Activated CD4-positive, alpha-beta T cell treated with anti-CD3 and anti-CD28 coated beads, Interleukin-2, amount 10 ng/mL, durations not matched to agents 24 days and 14 days (primary cell): ENCODE measurements at regions of chr7 and their contacts with region 1.

Region 1: DNA sequence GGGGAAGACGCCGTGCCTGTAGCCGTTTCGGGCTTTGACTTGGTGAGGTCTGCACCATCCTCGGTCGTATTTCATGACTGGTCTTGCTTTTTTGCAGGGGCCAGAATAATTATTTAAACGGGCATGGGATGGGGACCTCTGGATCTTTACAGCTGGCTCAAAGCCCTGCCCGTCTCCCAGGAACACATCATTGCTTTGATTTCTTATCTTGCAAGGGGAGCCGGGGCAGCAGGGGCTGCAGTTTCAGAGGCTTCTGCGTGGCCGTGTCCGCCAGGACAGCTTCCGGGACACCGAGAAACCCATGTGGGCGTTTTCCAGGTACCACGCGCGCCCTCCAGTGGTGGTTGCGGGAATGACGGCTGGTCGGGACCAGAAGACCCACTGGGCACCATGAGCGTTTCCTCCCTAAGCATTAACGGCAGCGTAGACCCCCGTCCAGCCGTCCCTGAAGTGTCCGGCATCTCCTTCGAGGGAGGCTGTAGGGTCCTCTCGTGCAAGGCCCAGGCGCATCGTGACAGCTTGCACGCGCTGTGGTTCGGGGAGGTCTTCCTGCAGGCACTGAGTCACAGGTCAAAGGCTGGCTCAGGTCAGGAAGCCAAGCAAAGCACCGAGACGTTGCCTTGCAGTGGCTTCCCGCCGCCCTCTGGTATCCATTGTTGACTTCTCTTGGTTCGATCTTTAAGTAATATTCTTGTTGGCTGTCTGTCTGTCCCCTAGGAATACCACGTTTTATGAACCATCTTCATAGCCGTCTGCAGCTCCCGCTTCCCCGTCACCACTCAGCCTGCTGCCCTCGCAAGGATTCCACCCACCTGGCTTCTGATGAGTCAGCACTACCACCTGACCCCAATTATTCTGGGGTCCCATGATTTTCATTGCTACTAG is 16.2 kb upstream of the ZFAND2A start:
- DNase-seq: peak; percentile 95
- H3K4me3 Mint-ChIP-seq: peak overlapping the region; percentile 48
- H3K27ac Mint-ChIP-seq: peak overlapping the region; percentile 60
- H3K4me1 Mint-ChIP-seq: peaks cover 10% of the 10 kb centered on the region
- H3K27me3 Mint-ChIP-seq: peaks cover 3% of the 10 kb centered on the region

Region 2: GRCh38 chr7:490461-491291 is 685.5 kb before region 1 on chr7:
- intact Hi-C with region 1: no loop called
- DNase-seq: no peak
- H3K4me3 Mint-ChIP-seq: no peak overlapping the region
- H3K27ac Mint-ChIP-seq: no peak overlapping the region
- H3K4me1 Mint-ChIP-seq: no peaks in the 10 kb centered on the region
- H3K27me3 Mint-ChIP-seq: peaks cover 16% of the 10 kb centered on the region

Region 3: GRCh38 chr7:992709-993607 is 183.3 kb before region 1 on chr7:
- intact Hi-C with region 1: loop called (anchors 1 kb)
- DNase-seq: peak; percentile 97
- H3K4me3 Mint-ChIP-seq: no peak overlapping the region
- H3K27ac Mint-ChIP-seq: peak overlapping the region; percentile 15
- H3K4me1 Mint-ChIP-seq: peaks cover 4% of the 10 kb centered on the region
- H3K27me3 Mint-ChIP-seq: no peaks in the 10 kb centered on the region

Region 4: DNA sequence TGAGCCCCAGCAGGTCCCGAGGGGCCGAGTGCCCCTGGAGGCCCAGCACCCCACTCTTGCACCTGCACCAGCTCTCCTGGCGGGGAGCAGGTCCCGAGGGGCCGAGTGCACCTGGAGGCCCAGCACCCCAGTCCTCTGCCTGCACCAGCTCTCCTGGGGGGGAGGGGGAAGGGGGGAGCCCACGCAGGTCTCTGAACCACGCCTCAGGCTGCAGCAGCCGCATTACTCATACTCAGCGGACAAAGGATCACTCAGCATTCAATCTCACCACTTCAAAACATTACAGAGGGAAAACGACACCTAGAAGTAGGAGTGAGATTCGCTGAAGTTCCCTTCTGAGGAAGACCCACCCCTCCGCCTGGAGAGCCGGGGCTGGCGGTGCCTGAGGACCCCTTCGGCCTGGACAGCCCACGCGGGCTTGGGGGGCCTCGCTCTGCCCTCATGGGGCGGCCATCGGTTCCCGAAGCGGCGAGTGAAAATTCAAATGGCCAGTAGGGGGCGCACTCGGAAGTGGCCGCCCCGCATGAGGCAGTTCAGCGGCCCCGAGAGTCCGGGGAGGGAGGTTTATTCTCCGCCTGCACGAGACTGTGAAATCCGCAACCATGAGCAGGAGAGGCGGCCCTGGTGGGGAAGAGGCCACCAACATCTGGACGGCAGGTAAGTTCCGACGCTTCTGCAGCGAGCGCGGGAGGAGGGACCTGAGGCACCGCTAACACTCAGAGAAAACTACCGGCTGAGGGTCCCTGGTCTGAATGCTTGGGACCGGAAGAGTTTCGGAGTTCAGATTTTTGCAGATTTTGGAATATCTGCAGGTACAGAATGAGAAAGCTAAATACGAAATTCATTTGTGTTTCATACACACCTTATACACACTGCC is 89.4 kb before region 1 on chr7:
- intact Hi-C with region 1: loop called (anchors 1 kb)
- DNase-seq: peak; percentile 93
- H3K4me3 Mint-ChIP-seq: peak overlapping the region; percentile 79
- H3K27ac Mint-ChIP-seq: peak overlapping the region; percentile 11
- H3K4me1 Mint-ChIP-seq: peaks cover 9% of the 10 kb centered on the region
- H3K27me3 Mint-ChIP-seq: peaks cover 2% of the 10 kb centered on the region

Region 5: DNA sequence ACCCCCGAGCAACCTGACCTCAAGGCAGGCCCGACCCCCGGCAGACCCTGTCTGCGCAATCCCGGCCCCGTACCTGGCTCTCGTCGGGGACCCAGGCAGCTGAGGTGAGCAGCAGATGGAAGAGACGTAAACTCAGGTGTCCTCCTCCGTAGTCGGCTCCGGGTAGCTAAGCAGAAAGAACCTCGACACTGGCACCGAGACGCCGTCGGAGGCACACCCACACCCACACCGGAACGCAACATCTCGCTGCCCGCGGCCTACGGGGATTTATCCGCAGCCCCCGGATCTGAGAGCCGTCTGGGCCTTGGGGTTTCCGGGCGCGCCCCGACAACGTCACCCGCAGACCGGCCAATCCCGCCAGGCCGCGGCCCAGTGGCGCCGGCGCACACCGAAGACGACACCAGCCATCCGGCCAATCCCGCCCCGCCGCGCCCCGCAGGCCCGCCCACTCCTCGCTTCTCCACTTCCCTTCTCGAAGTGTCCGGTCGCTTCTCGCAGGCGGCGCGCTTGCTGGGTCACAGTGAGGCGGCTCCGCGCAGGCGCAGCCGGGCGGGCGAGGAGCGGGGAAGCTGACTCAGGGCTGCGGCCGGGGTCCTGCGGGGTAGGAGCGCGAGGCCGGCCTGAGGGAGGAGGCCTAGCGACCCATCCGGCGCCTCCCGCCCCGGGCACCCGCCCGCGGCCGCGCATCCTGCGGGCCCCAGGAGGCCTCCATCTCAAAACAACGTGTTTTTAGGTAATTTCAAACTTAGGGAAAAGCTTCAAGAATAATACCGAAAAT is 16.1 kb before region 1 on chr7 and contains the start of gene ZFAND2A:
- intact Hi-C with region 1: loop called (anchors 2 kb)
- DNase-seq: peak; percentile 100
- H3K4me3 Mint-ChIP-seq: peak within 1 kb of the TSS; percentile 93
- H3K27ac Mint-ChIP-seq: peak within 1 kb of the TSS; percentile 89
- H3K4me1 Mint-ChIP-seq: peaks cover 18% of the 10 kb centered on the region
- H3K27me3 Mint-ChIP-seq: no peaks in the 10 kb centered on the region
- total RNA-seq, gene ZFAND2A: 19.9 and 24.2 TPM in 2 replicates

Region 6: DNA sequence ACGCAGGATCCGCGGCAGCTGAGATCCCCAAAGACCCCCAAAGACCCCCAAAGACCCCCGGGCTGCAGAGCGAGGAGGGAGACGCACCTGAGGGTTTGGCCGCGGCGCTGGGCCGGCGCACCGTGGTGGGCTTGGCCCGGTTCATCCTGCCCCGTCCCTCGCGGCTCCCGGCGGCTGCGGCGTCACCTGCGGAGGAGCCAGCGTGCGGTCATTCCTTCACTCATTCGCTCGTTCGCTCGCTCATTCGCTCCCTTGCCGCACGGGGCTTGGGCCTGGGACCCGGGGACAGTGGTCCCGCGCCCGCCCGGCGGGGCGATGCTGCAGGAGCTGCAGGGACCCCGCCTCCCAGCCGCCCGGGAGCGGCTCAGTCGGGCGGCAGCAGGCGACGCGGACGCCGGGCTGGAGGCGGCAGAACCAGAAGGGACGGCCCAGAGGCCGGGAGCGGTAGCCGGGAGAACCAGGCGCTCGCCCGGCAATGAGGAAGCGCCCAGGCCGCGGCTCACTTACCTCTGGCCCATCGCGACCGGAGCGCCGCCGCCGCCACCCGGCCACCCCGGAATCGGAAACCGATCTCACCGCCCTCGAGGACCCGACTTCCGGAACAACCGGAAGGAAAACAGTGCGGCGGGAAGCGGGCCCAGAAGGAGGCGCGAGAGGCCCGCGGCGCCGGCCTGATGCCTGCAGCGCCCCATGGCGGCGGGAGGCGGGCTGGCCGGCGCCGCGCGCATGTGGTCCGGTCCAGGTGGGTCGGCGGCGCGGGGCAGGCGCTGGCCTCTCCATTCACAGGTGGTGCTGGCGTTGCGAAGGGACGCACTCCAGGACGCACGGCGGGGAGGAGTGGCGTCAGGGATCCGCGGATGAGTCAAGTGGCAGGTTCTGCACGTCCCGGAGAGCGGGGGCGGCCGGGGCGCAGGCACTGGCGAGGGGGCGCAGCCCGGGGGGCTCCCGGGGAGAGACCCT is 327.9 kb after region 1 on chr7 and contains the start of gene INTS1:
- intact Hi-C with region 1: no loop called
- DNase-seq: peak; percentile 98
- H3K4me3 Mint-ChIP-seq: peak within 1 kb of the TSS; percentile 92
- H3K27ac Mint-ChIP-seq: peak within 1 kb of the TSS; percentile 92
- H3K4me1 Mint-ChIP-seq: peaks cover 33% of the 10 kb centered on the region
- H3K27me3 Mint-ChIP-seq: no peaks in the 10 kb centered on the region
- total RNA-seq, gene INTS1: 89.5 and 94.3 TPM in 2 replicates

Region 7: GRCh38 chr7:1619152-1620006 is 443.2 kb after region 1 on chr7:
- intact Hi-C with region 1: no loop called
- DNase-seq: peak; percentile 62
- H3K4me3 Mint-ChIP-seq: no peak overlapping the region
- H3K27ac Mint-ChIP-seq: no peak overlapping the region
- H3K4me1 Mint-ChIP-seq: no peaks in the 10 kb centered on the region
- H3K27me3 Mint-ChIP-seq: peaks cover 2% of the 10 kb centered on the region